ENCODE measurements at regions of chr1 and their contacts with region 1.

Region 1: GRCh38 chr1:39098546-39099250 is 72.5 kb downstream of the NDUFS5 start:
- DNase-seq: peak; percentile 82
- H3K4me3 ChIP-seq: no peak overlapping the region
- H3K27ac ChIP-seq: no peak overlapping the region
- H3K27me3 ChIP-seq: no peaks in the 10 kb centered on the region
- CTCF ChIP-seq: peak; percentile 80

Region 2: GRCh38 chr1:37556712-37557196 is 1541.9 kb before region 1 on chr1 and contains the start of gene DNALI1:
- CTCF ChIA-PET with region 1: no interaction called
- POLR2A ChIA-PET with region 1: no interaction called
- DNase-seq: peak; percentile 81
- H3K4me3 ChIP-seq: peak within 1 kb of the TSS; percentile 70
- H3K27ac ChIP-seq: peak within 1 kb of the TSS; percentile 47
- H3K27me3 ChIP-seq: no peaks in the 10 kb centered on the region
- CTCF ChIP-seq: no peak
- polyA plus RNA-seq, gene DNALI1: 13.1 and 14.2 TPM in 2 replicates

Region 3: GRCh38 chr1:39065542-39065941 is 33.2 kb before region 1 on chr1:
- CTCF ChIA-PET with region 1: no interaction called
- POLR2A ChIA-PET with region 1: no interaction called
- DNase-seq: no peak
- H3K4me3 ChIP-seq: no peak overlapping the region
- H3K27ac ChIP-seq: no peak overlapping the region
- H3K27me3 ChIP-seq: no peaks in the 10 kb centered on the region
- CTCF ChIP-seq: no peak

Region 4: DNA sequence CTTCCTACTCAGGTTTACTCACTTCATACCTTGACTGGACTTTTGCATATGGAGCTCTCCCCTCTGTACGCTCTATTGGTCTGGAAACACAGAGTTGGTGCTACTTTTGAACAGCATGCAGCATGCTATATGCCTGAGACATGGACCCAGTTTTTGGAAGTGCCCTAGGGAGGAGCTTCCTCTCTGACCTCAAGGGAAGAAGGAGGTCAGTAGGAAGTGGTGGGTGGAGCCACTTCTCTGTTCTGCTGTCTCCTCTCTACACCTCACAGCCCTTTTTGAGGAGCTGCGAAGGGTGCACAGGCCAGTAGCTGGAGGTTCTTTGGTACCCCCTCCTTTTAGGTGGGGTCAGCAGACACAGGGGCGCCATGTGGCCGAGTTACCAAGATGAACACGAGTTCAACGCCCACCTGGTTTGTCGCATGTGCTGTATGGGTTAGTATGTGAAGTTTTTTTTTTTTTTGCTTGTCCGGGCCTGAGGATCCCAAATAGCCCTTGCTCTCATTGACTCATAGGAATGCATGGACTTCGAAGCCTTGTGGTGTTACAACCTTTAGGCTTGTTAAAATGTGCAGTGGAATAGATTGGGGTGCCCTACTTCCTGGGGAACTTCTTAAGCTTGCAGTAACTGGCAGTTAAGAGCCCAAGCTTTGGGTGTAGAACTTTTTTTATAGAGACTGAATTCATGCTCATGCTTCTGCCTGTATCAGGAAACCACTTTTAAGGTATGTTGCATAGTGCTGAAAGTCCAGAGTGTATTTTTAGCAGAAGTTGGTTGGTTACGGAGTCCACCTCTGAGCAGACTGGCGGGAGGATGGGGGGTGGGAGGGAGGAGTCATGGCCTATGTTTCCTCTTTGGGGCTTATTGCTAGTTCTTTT is 116.5 kb after region 1 on chr1:
- CTCF ChIA-PET with region 1: interaction called, 18 read pairs
- POLR2A ChIA-PET with region 1: no interaction called
- DNase-seq: no peak
- H3K4me3 ChIP-seq: no peak overlapping the region
- H3K27ac ChIP-seq: peak overlapping the region; percentile 13
- H3K27me3 ChIP-seq: no peaks in the 10 kb centered on the region
- CTCF ChIP-seq: no peak

Region 5: GRCh38 chr1:39268112-39268581 is 169.4 kb after region 1 on chr1:
- CTCF ChIA-PET with region 1: interaction called, 15 read pairs
- POLR2A ChIA-PET with region 1: interaction called, 3 read pairs
- DNase-seq: peak; percentile 70
- H3K4me3 ChIP-seq: peak overlapping the region; percentile 51
- H3K27ac ChIP-seq: peak overlapping the region; percentile 75
- H3K27me3 ChIP-seq: no peaks in the 10 kb centered on the region
- CTCF ChIP-seq: no peak

Region 6: DNA sequence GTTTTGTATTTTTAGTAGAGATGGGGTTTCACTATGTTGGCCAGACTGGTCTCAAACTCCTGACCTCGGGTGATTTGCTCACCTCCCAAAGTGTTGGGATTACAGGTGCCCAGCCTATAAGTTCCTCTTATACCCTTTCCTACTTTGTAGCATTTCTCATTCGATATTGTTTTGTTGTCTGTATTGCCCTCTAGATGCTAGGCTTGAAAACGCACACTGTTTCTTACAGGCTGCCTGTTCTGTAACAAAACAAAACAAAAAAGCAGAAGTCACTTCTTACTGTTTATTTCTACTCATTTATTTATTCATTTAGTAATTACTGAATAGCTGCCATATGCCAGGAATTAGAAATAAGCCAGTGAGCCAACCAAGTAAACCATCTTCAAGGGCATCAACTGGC is 255.9 kb after region 1 on chr1:
- CTCF ChIA-PET with region 1: interaction called, 12 read pairs
- POLR2A ChIA-PET with region 1: no interaction called
- DNase-seq: no peak
- H3K4me3 ChIP-seq: no peak overlapping the region
- H3K27ac ChIP-seq: no peak overlapping the region
- H3K27me3 ChIP-seq: no peaks in the 10 kb centered on the region
- CTCF ChIP-seq: 0 out of 2 replicates have a peak, but pooled peaks have one; percentile 8

Region 7: GRCh38 chr1:39453603-39454002 is 354.9 kb after region 1 on chr1:
- CTCF ChIA-PET with region 1: interaction called, 13 read pairs
- POLR2A ChIA-PET with region 1: no interaction called
- DNase-seq: peak; percentile 38
- H3K4me3 ChIP-seq: no peak overlapping the region
- H3K27ac ChIP-seq: no peak overlapping the region
- H3K27me3 ChIP-seq: no peaks in the 10 kb centered on the region
- CTCF ChIP-seq: no peak

Measured in AG04450 (cell line).